A549 (cell line): ENCODE measurements at regions of chr1 and their contacts with region 1.

Region 1: DNA sequence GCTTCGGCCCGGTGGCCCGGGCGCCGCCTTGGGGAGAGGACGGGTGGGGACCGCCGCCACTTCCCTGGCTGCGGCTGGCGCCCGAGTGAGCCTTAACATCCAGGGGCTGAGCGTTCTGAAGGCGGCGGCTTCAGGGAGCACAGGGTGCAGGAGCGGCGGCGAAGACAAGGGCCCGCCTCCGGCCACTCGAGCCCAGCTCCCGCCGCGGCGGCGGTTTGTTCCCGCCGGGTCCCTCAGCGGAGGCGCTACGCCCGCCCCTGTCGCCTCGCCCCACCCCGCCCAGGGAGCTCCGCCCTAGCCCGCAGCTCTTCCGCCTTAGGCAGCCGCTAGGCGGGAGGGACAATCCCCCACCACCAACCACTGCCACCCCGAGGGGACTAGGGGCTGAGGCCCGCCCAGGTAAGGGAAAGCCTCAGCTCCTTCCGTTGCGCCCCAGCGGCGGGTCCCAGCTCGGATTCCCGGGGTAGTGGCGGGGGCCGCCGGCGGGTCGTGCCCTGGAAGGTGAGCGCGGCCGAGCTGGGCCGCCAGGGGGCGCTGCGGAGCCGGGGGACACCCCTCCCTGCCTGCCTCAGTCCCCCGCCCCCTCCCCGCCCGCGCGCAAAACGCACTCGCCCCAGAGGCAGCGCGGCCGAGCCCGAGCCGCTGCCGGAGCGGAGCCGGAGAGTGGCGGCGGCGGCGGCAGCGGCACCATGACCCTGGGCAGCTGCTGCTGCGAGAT is at the start of gene FOXD2:
- DNase-seq: peak; percentile 77 to 84
- ATAC-seq: peak; percentile 88 to 90
- H3K4me3 ChIP-seq: peak within 1 kb of the TSS; percentile 96
- H3K27ac ChIP-seq: peak within 1 kb of the TSS; percentile 95 to 99
- H3K4me1 ChIP-seq: peaks cover 7% of the 10 kb centered on the region; the same call in 1 of the 3 replicates
- CTCF ChIP-seq: peak; percentile 94
- EP300 ChIP-seq: no peak
- POLR2A ChIP-seq: peak; percentile 58
- RAD21 ChIP-seq: peak; percentile 26 to 83; a peak in 4 of 5 replicates
- polyA plus RNA-seq, gene FOXD2: 0.12 and 0.13 TPM in 2 replicates

Region 2: DNA sequence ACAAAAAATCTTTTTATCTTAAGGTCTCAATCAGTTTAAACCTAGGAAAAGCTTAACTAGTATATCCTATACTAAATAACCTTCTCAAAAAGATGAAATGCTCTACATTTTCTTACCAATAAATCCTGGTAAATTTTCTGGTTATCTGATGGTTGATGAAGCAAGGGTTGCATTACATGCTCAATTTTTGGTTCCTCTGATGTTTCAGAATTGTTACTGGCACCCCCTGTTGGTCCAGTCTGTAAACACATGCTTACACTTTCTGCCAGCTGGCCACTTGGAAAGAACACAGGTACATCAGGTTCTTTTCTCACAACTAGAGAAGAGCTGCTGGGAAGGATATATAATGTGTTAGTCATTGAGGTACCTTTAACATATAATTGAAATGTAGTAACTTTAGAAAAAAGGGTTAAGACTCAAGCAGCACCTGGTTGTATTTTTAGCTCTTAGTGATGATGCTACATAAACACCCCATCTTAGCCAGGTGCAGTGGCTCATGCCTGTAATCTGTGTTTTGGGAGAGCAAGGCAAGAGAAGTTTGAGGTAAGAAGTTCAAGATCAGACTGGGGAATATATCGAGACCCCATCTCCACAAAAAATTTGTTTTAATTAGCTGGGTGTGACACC is 174.7 kb before region 1 on chr1:
- CTCF ChIA-PET with region 1: no interaction called
- POLR2A ChIA-PET with region 1: no interaction called
- DNase-seq: peak; percentile 48 to 50
- ATAC-seq: peak; percentile 56 to 73; a peak in 4 of 6 replicates
- H3K4me3 ChIP-seq: no peak overlapping the region
- H3K27ac ChIP-seq: no peak overlapping the region
- H3K4me1 ChIP-seq: no peaks in the 10 kb centered on the region
- CTCF ChIP-seq: peak; percentile 65
- EP300 ChIP-seq: no peak
- POLR2A ChIP-seq: no peak
- RAD21 ChIP-seq: peak; percentile 53 to 55

Region 3: DNA sequence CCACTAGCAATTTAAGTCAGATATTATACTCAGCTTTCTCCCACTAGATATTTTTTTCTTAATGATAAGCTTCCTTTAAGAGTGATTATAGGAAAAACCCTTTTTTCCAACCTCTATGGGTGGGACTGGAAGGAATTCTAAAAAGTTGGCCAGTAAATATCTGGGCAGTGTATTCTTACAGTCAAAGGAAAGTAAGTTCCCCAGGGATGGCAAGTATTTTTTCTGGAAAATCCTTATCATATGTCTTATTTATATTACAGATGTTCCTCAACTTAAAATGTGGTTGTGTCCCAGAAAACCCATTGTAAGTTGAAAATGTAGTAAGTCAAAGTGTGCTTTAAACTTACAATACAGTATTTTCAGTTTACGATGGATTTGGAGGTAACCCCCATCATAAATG is 74.8 kb before region 1 on chr1:
- CTCF ChIA-PET with region 1: no interaction called
- POLR2A ChIA-PET with region 1: no interaction called
- DNase-seq: no peak
- ATAC-seq: no peak
- H3K4me3 ChIP-seq: no peak overlapping the region
- H3K27ac ChIP-seq: no peak overlapping the region
- H3K4me1 ChIP-seq: no peaks in the 10 kb centered on the region
- CTCF ChIP-seq: no peak
- EP300 ChIP-seq: no peak
- POLR2A ChIP-seq: no peak
- RAD21 ChIP-seq: no peak

Region 4: GRCh38 chr1:47388891-47389238 is 48.7 kb before region 1 on chr1:
- CTCF ChIA-PET with region 1: interaction called, 11 read pairs
- POLR2A ChIA-PET with region 1: interaction called, 4 read pairs
- DNase-seq: peak; percentile 53 to 60
- ATAC-seq: peak; percentile 94 to 96
- H3K4me3 ChIP-seq: no peak overlapping the region
- H3K27ac ChIP-seq: no peak overlapping the region
- H3K4me1 ChIP-seq: no peaks in the 10 kb centered on the region
- CTCF ChIP-seq: peak; percentile 63
- EP300 ChIP-seq: no peak
- POLR2A ChIP-seq: no peak
- RAD21 ChIP-seq: peak; percentile 70 to 74

Region 5: DNA sequence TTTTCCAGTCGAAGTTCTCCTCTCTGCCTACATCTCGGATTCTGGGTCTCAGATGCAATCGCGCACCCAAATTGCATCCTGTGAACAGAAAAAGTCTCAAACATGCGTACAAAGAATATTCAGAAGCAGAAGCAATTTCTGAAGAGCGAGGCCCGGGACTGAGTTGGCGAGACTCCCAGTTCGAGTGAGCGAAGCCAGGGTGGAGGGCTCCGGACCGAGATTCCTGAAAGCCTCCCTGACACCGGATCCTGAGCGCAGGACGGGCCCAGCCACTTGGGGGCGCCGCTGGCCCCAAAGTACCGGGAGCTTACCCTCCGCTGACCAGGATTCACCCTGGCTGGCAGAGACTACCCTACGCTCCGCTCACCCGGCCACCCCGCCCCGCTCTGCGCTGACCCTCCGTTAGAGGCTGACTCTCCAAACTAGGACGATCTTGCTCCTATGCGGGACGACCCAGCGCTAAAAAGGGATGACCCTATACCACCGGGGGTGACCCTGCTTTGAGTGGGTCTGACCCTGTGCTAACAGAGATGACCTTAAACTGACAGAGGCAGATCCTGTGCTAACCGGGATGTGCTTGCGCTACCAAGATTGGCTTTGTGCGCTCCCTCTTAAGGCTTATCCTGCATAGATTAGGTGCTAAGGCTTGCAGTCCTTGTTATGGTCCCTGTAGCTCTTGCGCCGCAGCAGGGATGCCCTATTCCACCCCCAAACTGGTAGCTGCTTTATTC is 12.4 kb after region 1 on chr1:
- CTCF ChIA-PET with region 1: interaction called, 47 read pairs
- POLR2A ChIA-PET with region 1: no interaction called
- DNase-seq: peak; percentile 39 to 67
- ATAC-seq: peak; percentile 77 to 95
- H3K4me3 ChIP-seq: no peak overlapping the region
- H3K27ac ChIP-seq: peak overlapping the region in 1 of 2 experiments; percentile 33; a peak in 1 of 6 replicates
- H3K4me1 ChIP-seq: no peaks in the 10 kb centered on the region
- CTCF ChIP-seq: peak; percentile 53
- EP300 ChIP-seq: no peak
- POLR2A ChIP-seq: no peak
- RAD21 ChIP-seq: peak; percentile 64 to 69

Region 6: GRCh38 chr1:47696740-47697441 is 259.3 kb after region 1 on chr1:
- CTCF ChIA-PET with region 1: interaction called, 296 read pairs
- POLR2A ChIA-PET with region 1: no interaction called
- DNase-seq: no peak
- ATAC-seq: no peak
- H3K4me3 ChIP-seq: no peak overlapping the region
- H3K27ac ChIP-seq: no peak overlapping the region
- H3K4me1 ChIP-seq: no peaks in the 10 kb centered on the region
- CTCF ChIP-seq: no peak
- EP300 ChIP-seq: no peak
- POLR2A ChIP-seq: no peak
- RAD21 ChIP-seq: no peak